ENCODE measurements at regions of chr10 and their contacts with region 1.

Region 1: GRCh38 chr10:72389716-72390115 is 35.0 kb upstream of the DNAJB12 start:
- H3K4me3 ChIP-seq: no peak overlapping the region
- H3K27ac ChIP-seq: no peak overlapping the region
- H3K4me1 ChIP-seq: no peaks in the 10 kb centered on the region
- CTCF ChIP-seq: no peak

Region 2: GRCh38 chr10:72407927-72408600 is 18.3 kb after region 1 on chr10:
- CTCF ChIA-PET with region 1: no interaction called
- POLR2A ChIA-PET with region 1: no interaction called
- H3K4me3 ChIP-seq: no peak overlapping the region
- H3K27ac ChIP-seq: no peak overlapping the region
- H3K4me1 ChIP-seq: no peaks in the 10 kb centered on the region
- CTCF ChIP-seq: no peak

Region 3: GRCh38 chr10:72435570-72435969 is 45.9 kb after region 1 on chr10:
- CTCF ChIA-PET with region 1: interaction called, 10 read pairs
- POLR2A ChIA-PET with region 1: no interaction called
- H3K4me3 ChIP-seq: no peak overlapping the region
- H3K27ac ChIP-seq: no peak overlapping the region
- H3K4me1 ChIP-seq: no peaks in the 10 kb centered on the region
- CTCF ChIP-seq: no peak

Measured in HEK293 (cell line).